ENCODE measurements at regions of chr6 and their contacts with region 1.

Region 1: GRCh38 chr6:144582939-144583613 is 297.9 kb downstream of the UTRN start:
- DNase-seq: peak; percentile 26 to 30
- ATAC-seq: peak; percentile 64

Region 2: GRCh38 chr6:144262470-144263369 is 320.4 kb before region 1 on chr6:
- intact Hi-C with region 1: no loop called
- DNase-seq: peak in 1 of 2 donors; percentile 34
- ATAC-seq: peak; percentile 74

Region 3: GRCh38 chr6:144912474-144912873 is 329.4 kb after region 1 on chr6:
- intact Hi-C with region 1: no loop called
- DNase-seq: no peak
- ATAC-seq: no peak

Region 4: GRCh38 chr6:144931172-144932035 is 348.3 kb after region 1 on chr6:
- intact Hi-C with region 1: loop called in 1 of 2 experiments (anchors 10 kb)
- DNase-seq: peak in 1 of 2 donors; percentile 37
- ATAC-seq: peak; percentile 58

Region 5: GRCh38 chr6:145028144-145028818 is 445.2 kb after region 1 on chr6:
- intact Hi-C with region 1: loop called in 1 of 2 experiments (anchors 10 kb)
- DNase-seq: peak in 1 of 2 donors; percentile 5
- ATAC-seq: peak; percentile 75

Region 6: DNA sequence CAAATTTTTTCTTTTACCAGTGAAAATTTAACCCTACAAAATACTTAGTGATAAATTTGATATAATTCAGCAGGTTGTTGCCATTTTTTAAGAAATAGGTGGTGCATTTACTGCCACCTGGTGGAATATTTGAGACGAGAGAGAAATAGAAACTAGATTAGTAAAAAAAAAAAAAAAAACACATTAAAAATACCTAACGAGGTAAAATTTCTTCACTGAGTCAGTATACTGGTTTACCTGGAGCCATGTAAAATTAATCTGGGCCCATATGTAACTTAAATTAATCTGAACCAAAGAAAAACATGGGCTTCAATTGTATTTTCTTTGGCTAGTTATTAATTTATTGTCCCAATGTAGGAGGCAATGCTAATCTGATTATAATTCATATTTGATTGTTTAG is 631.5 kb after region 1 on chr6:
- intact Hi-C with region 1: loop called in 1 of 2 experiments (anchors 10 kb)
- DNase-seq: no peak
- ATAC-seq: no peak

Measured in left colon (tissue), 2 donors.